Activated CD8-positive, alpha-beta memory T cell treated with anti-CD3 and anti-CD28 coated beads, Interleukin-2, amount 10 ng/mL, durations not matched to agents 7 days and 5 days (primary cell): ENCODE measurements at regions of chr5 and their contacts with region 1.

Region 1: GRCh38 chr5:154509784-154510555 is 31.9 kb upstream of the HAND1 start:
- DNase-seq: no peak
- ATAC-seq: no peak
- H3K4me3 Mint-ChIP-seq: no peak overlapping the region
- H3K27ac Mint-ChIP-seq: no peak overlapping the region
- H3K4me1 Mint-ChIP-seq: peaks cover 25% of the 10 kb centered on the region
- H3K27me3 Mint-ChIP-seq: peaks cover 51% of the 10 kb centered on the region

Region 2: GRCh38 chr5:154384480-154385235 is 125.3 kb before region 1 on chr5:
- CTCF ChIA-PET with region 1: no interaction called
- DNase-seq: peak; percentile 60
- ATAC-seq: peak; percentile 71
- H3K4me3 Mint-ChIP-seq: no peak overlapping the region
- H3K27ac Mint-ChIP-seq: peak overlapping the region; percentile 69
- H3K4me1 Mint-ChIP-seq: peaks cover 18% of the 10 kb centered on the region
- H3K27me3 Mint-ChIP-seq: no peaks in the 10 kb centered on the region

Region 3: GRCh38 chr5:154493274-154493673 is 16.7 kb before region 1 on chr5:
- CTCF ChIA-PET with region 1: no interaction called
- DNase-seq: no peak
- ATAC-seq: no peak
- H3K4me3 Mint-ChIP-seq: no peak overlapping the region
- H3K27ac Mint-ChIP-seq: no peak overlapping the region
- H3K4me1 Mint-ChIP-seq: no peaks in the 10 kb centered on the region
- H3K27me3 Mint-ChIP-seq: peaks cover 56% of the 10 kb centered on the region

Region 4: DNA sequence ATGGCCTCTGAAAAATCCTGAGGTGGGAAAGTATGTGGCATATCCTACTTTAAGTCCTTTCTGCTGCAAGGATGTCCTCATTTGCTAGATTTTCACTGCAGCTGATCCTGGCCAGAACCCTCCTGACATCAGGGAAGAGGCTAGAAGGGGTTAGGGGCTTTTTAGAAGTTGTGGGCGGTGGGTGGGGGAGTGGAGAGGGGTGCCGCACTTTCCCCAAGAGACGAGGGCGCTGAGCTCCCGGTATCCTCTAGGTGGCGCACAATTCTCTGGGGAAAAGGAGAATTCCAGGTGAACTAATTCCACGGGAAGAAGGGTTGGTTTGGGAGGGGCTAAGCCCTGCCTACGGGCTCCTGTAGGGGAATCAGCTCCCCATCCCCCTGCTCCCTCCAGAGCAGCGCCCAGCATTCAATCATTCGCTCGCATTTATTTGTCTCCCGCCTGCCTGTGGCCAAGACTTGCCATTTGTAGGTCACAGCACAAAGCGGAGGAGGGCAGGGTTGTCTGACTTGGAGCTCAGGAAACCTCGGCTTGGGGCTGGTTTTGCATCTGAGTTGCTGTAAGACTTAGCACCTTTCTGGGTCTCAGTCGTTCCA is 11.0 kb after region 1 on chr5:
- CTCF ChIA-PET with region 1: interaction called, 18 read pairs
- DNase-seq: no peak
- ATAC-seq: no peak
- H3K4me3 Mint-ChIP-seq: no peak overlapping the region
- H3K27ac Mint-ChIP-seq: no peak overlapping the region
- H3K4me1 Mint-ChIP-seq: no peaks in the 10 kb centered on the region
- H3K27me3 Mint-ChIP-seq: peaks cover 47% of the 10 kb centered on the region

Region 5: DNA sequence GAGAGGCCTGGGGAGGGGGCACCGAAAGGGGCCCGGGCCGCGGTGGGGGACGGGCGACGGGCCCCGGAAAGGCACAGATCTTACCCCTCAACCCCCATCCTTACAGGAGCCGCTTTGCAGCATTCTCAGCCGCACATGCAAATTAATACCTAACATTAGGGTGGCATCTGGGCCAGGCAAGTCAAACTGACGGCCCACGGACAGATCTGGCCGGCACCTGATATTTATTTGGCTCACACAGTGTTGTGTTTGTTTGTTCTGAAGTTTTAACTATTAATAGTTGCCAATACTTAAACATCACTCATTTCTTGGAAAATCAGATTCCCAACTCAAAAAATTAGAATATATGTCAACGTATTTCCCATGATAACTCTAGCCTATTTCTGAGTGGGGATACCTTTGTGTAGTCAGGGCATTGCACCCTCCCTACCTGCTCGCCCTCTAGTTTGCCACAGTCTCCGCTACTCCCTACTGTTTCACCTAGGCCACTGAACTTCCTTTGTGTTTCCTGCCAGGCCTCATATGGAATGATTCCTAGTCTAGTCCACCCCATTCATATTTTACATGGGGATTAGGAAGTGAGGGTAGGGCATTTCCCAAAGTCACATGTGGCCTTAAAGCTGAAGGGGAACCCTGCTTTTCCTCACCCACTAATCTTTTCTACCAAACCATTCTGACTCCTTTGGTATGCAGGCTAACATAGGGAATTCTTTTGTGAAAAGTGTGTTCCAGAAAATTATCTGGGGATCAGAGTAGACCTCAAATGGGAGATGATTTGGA is 173.3 kb after region 1 on chr5:
- CTCF ChIA-PET with region 1: no interaction called
- DNase-seq: no peak
- ATAC-seq: no peak
- H3K4me3 Mint-ChIP-seq: no peak overlapping the region
- H3K27ac Mint-ChIP-seq: no peak overlapping the region
- H3K4me1 Mint-ChIP-seq: peaks cover 4% of the 10 kb centered on the region
- H3K27me3 Mint-ChIP-seq: peaks cover 29% of the 10 kb centered on the region